CD8-positive, alpha-beta T cell (primary cell): ENCODE measurements at regions of chr11 and their contacts with region 1.

Region 1: DNA sequence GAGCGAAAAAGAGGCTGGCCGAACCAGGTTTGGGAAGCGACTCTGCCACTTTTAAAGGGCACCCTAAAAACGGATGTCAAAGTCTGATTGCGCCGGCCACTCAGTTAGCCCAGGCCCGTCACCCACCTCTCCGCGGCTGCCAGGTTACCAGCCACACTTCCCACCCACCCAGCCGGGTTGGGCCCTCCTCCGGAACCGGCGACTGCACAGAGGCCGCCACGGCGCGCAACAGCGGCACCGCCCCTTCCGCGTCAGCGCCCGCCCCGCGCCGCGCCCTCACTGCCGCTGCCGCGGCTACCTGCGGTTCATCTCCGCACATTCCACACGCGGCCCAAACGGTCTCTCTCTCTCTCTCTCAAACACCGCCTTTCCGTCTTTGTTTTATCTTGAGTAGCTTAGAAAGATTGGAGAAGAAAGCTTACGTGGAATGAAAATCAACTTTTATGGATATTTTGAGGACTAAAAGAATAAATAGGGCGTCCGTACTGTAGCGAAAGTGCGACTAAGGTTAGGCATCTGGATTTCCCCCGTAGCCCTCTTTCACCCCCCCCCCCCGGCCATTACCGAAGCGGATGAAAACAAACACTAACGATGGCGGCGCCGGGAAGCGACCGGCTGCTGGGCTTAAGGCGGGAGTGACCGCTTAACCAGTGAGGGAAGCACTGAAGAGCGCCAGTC is at the starts of genes ATG13 and HARBI1:
- DNase-seq: peak; percentile 81 to 96 (median 92)
- ATAC-seq: peak; percentile 91
- H3K4me3 ChIP-seq: peak within 1 kb of the TSS; percentile 84 to 95
- H3K4me3 Mint-ChIP-seq: peak within 1 kb of the TSS; percentile 95
- H3K27ac ChIP-seq: peak within 1 kb of the TSS; percentile 96 to 98
- H3K27ac Mint-ChIP-seq: peak within 1 kb of the TSS; percentile 98
- H3K4me1 ChIP-seq: peaks cover 19% of the 10 kb centered on the region
- H3K4me1 Mint-ChIP-seq: peaks cover 42% of the 10 kb centered on the region
- H3K27me3 ChIP-seq: no peaks in the 10 kb centered on the region
- H3K27me3 Mint-ChIP-seq: no peaks in the 10 kb centered on the region
- CTCF ChIP-seq: no peak
- total RNA-seq, gene ATG13: 117 to 137 TPM
- total RNA-seq, gene HARBI1: 18.1 to 19.1 TPM

Region 2: GRCh38 chr11:46346886-46347636 is 270.1 kb before region 1 on chr11 and contains the start of gene DGKZ:
- CTCF ChIA-PET with region 1: interaction called, 4 read pairs
- POLR2A ChIA-PET with region 1: interaction called, 4 read pairs
- intact Hi-C with region 1: loop called in 1 of 2 experiments (anchors 1 kb)
- DNase-seq: peak; percentile 83 to 96 (median 87)
- ATAC-seq: peak; percentile 80
- H3K4me3 ChIP-seq: peak within 1 kb of the TSS; percentile 72 to 94
- H3K4me3 Mint-ChIP-seq: peak within 1 kb of the TSS; percentile 90
- H3K27ac ChIP-seq: peak within 1 kb of the TSS; percentile 55 to 68
- H3K27ac Mint-ChIP-seq: peak within 1 kb of the TSS; percentile 90
- H3K4me1 ChIP-seq: peaks cover 72% of the 10 kb centered on the region
- H3K4me1 Mint-ChIP-seq: peaks cover 79% of the 10 kb centered on the region
- H3K27me3 ChIP-seq: no peaks in the 10 kb centered on the region
- H3K27me3 Mint-ChIP-seq: no peaks in the 10 kb centered on the region
- CTCF ChIP-seq: peak; percentile 55
- total RNA-seq, gene DGKZ: 131 to 135 TPM

Region 3: DNA sequence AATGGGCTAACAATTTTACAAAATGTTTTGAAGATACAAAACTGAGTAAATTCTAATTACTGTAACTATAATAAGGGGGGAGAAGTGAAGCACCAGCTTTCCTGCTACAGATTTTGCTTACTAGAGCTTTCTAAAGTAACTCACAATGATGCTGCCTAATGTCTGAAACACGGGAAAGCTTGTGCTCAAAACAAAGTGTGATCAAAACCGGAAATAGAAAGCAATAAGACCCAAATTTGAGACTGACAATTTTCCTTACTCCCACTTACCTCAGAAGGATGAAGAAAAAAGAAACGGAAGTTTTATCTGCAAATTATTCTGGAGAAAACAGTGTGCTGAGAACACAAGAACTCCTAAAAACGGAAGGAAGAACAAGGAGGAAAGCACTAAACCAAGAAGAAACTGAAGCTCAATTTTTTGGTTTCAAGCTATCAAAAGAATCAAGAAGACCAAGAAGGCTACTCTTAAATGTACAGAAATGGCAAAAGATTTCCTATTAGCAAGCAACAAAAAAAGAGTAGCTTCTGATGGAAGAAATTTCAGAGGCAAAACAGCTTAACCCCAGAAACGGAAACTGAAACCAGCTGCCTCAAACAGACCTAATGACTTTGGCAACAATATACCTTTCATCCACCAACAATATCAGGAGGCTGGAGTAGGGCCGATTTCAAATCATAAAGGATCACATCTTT is 56.7 kb before region 1 on chr11:
- CTCF ChIA-PET with region 1: interaction called, 3 read pairs
- POLR2A ChIA-PET with region 1: interaction called, 5 read pairs
- intact Hi-C with region 1: loop called in 1 of 2 experiments (anchors 2 kb)
- DNase-seq: peak in 3 of 9 experiments; percentile 21 to 67 (median 45)
- ATAC-seq: peak; percentile 72
- H3K4me3 ChIP-seq: peak overlapping the region; percentile 36 to 50
- H3K4me3 Mint-ChIP-seq: peak overlapping the region; percentile 90
- H3K27ac ChIP-seq: peak overlapping the region; percentile 34 to 85
- H3K27ac Mint-ChIP-seq: peak overlapping the region; percentile 93
- H3K4me1 ChIP-seq: peaks cover 38% of the 10 kb centered on the region
- H3K4me1 Mint-ChIP-seq: peaks cover 65% of the 10 kb centered on the region
- H3K27me3 ChIP-seq: no peaks in the 10 kb centered on the region
- H3K27me3 Mint-ChIP-seq: no peaks in the 10 kb centered on the region
- CTCF ChIP-seq: no peak

Region 4: GRCh38 chr11:46669711-46670139 is 52.6 kb after region 1 on chr11:
- CTCF ChIA-PET with region 1: interaction called, 8 read pairs
- POLR2A ChIA-PET with region 1: interaction called, 9 read pairs
- intact Hi-C with region 1: loop called in 1 of 2 experiments (anchors 1 kb)
- DNase-seq: peak in 1 of 9 experiments; percentile 30
- ATAC-seq: no peak
- H3K4me3 ChIP-seq: no peak overlapping the region
- H3K4me3 Mint-ChIP-seq: peak overlapping the region; percentile 15
- H3K27ac ChIP-seq: peak overlapping the region in 1 of 2 experiments; percentile 61
- H3K27ac Mint-ChIP-seq: peak overlapping the region; percentile 29
- H3K4me1 ChIP-seq: peaks cover 58% of the 10 kb centered on the region
- H3K4me1 Mint-ChIP-seq: peaks cover 54% of the 10 kb centered on the region
- H3K27me3 ChIP-seq: no peaks in the 10 kb centered on the region
- H3K27me3 Mint-ChIP-seq: no peaks in the 10 kb centered on the region
- CTCF ChIP-seq: no peak

Region 5: GRCh38 chr11:46845740-46846509 is 228.8 kb after region 1 on chr11 and contains the start of gene CKAP5:
- CTCF ChIA-PET with region 1: no interaction called
- POLR2A ChIA-PET with region 1: no interaction called
- intact Hi-C with region 1: loop called in 1 of 2 experiments (anchors 1 kb)
- DNase-seq: peak; percentile 68 to 91 (median 84)
- ATAC-seq: peak; percentile 91
- H3K4me3 ChIP-seq: peak within 1 kb of the TSS; percentile 75 to 85
- H3K4me3 Mint-ChIP-seq: peak within 1 kb of the TSS; percentile 98
- H3K27ac ChIP-seq: peak within 1 kb of the TSS; percentile 64 to 69
- H3K27ac Mint-ChIP-seq: peak within 1 kb of the TSS; percentile 95
- H3K4me1 ChIP-seq: peaks cover 13% of the 10 kb centered on the region
- H3K4me1 Mint-ChIP-seq: peaks cover 37% of the 10 kb centered on the region
- H3K27me3 ChIP-seq: no peaks in the 10 kb centered on the region
- H3K27me3 Mint-ChIP-seq: no peaks in the 10 kb centered on the region
- CTCF ChIP-seq: no peak
- total RNA-seq, gene CKAP5: 18.8 to 22.1 TPM

Region 6: DNA sequence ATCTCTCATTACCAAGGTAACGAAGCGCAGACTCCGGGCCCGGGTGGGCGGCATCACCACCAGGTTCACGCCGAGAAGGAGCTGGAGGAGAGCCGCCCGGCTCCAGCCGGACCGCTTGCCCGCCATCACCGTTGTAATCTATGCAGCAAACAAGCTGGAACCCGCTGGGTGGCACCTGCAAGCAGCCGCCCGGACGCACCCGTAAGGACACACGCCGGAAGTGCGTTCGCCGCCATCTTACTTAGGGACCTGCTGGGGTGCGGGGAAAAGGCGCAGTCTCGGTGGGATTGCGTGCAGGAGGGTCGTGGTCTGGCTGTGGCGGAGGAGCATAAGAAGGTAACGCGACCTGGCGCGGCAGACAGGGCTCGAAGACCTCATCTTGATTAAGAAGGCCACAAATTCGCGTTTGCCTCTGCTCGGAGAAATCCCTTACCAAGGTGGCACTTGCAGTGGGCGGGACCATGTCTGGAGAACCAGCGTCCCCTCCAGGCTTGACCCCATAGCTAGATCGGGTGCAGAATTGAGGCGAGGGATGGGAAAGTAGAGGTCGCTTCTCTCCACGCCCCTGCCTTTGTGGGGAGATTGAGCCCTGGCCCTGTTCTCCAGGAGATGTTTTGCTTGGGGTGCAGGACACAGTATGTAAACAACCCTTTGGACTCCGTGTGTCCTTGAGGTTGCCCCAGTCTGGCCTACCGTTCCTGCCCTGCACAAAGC is 631.7 kb after region 1 on chr11 and contains the start of gene ACP2:
- CTCF ChIA-PET with region 1: no interaction called
- POLR2A ChIA-PET with region 1: no interaction called
- intact Hi-C with region 1: loop called in 1 of 2 experiments (anchors 2 kb)
- DNase-seq: peak; percentile 70 to 93 (median 85)
- ATAC-seq: peak; percentile 97
- H3K4me3 ChIP-seq: peak within 1 kb of the TSS; percentile 81 to 90
- H3K4me3 Mint-ChIP-seq: peak within 1 kb of the TSS; percentile 100
- H3K27ac ChIP-seq: peak within 1 kb of the TSS; percentile 63 to 83
- H3K27ac Mint-ChIP-seq: peak within 1 kb of the TSS; percentile 100
- H3K4me1 ChIP-seq: peaks cover 17% of the 10 kb centered on the region
- H3K4me1 Mint-ChIP-seq: peaks cover 32% of the 10 kb centered on the region
- H3K27me3 ChIP-seq: no peaks in the 10 kb centered on the region
- H3K27me3 Mint-ChIP-seq: no peaks in the 10 kb centered on the region
- CTCF ChIP-seq: no peak
- total RNA-seq, gene ACP2: 18.3 to 22.6 TPM